ENCODE measurements at regions of chr3 and their contacts with region 1.

Region 1: DNA sequence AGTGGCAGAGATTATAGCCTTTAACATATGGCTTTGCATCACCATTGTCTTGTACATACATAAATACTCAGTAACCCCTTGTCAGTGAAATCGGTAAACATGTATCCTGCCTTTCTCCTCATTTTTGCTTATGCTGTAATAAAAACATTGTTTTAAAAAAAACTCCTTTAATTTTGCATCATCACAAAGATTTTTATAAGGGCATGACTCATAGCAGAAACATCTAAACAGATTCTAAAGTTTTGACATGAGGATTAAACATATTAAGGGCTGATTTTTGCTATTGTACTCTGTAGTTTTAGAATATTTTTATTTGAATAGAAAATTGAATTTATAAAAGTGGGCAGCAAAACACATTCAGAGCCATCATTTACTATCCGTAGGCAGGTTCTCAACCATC is 275.9 kb downstream of the ZIC4 start:
- DNase-seq: peak; percentile 39
- H3K4me3 ChIP-seq: no peak overlapping the region
- H3K27me3 ChIP-seq: no peaks in the 10 kb centered on the region
- CTCF ChIP-seq: no peak

Region 2: DNA sequence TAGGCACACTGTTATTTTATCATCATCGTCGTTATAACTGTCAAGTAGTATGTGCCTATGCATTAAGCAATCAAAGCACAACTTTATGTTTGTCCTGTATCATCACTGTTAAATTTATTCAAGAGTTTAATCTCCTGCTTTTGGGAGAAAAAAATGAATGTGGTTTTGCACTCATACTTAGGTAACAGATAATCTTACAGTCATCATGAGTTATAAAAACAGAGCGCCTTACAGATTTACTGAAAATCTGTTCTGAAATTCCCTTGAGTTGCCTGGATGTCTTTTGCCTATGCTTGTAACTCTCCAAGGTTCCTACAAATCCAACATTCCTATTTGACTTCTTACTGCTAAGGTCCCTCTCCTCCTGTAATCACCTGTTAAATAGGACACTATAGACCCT is 31.4 kb before region 1 on chr3:
- CTCF ChIA-PET with region 1: no interaction called
- POLR2A ChIA-PET with region 1: no interaction called
- DNase-seq: no peak
- H3K4me3 ChIP-seq: no peak overlapping the region
- H3K27me3 ChIP-seq: no peaks in the 10 kb centered on the region
- CTCF ChIP-seq: no peak

Region 3: GRCh38 chr3:147119989-147120388 is 10.5 kb before region 1 on chr3:
- CTCF ChIA-PET with region 1: interaction called, 23 read pairs
- POLR2A ChIA-PET with region 1: no interaction called
- DNase-seq: peak; percentile 46
- H3K4me3 ChIP-seq: no peak overlapping the region
- H3K27me3 ChIP-seq: no peaks in the 10 kb centered on the region
- CTCF ChIP-seq: peak; percentile 59